ENCODE measurements at regions of chr12 and their contacts with region 1.

Region 1: DNA sequence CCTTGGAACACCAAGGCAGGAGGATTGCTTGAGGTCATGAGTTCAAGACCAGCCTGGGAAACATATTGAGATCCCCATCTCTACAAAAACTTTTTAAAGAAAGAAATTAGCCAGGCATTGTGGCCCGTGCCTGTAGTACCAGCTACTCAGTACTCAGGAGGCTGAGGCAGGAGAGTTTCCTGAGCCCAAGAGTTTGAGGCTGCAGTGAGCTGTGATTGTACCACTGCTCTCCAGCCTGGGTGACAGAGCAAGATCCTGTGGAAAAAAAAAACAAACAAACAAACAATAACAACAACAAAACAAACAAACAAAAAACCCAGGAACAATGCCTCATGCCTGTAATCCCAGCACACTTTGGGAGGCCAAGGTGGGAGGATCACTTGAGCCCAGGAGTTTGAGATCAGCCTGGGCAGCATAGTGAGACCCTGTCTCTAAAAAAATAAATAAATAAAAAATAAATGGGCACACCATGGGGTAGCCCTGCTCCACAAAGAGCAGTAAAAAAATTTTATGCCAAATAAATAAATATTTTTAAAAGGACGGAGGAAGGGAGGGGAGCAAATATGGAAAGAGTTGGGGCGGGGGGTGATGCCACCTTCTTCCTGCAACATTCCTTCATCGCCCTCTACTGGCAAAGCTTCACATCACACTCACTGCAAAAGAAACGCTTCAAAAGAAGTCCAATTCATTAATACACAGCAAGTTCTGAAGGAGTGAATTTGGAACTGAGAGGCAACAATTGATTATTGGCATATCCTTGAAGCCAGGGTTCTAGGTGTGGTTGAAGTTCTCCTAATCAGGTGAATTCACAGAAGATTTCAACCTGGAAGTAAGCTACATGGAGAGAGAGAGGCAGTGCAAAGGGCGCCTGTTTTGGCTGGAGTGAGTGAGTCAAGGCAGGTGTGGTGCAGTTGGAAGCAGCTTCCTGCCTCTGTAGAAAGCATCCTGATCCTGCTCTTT is 8.8 kb upstream of the GNPTAB start:
- DNase-seq: no peak
- H3K4me3 ChIP-seq: no peak overlapping the region
- H3K27ac ChIP-seq: no peak overlapping the region
- H3K4me1 ChIP-seq: peaks cover 0 to 10% (median 0%) of the 10 kb centered on the region in 3 donors
- H3K27me3 ChIP-seq: no peaks in the 10 kb centered on the region
- CTCF ChIP-seq: peak; percentile 73 to 90 (median 83)
- POLR2A ChIP-seq: no peak

Region 2: DNA sequence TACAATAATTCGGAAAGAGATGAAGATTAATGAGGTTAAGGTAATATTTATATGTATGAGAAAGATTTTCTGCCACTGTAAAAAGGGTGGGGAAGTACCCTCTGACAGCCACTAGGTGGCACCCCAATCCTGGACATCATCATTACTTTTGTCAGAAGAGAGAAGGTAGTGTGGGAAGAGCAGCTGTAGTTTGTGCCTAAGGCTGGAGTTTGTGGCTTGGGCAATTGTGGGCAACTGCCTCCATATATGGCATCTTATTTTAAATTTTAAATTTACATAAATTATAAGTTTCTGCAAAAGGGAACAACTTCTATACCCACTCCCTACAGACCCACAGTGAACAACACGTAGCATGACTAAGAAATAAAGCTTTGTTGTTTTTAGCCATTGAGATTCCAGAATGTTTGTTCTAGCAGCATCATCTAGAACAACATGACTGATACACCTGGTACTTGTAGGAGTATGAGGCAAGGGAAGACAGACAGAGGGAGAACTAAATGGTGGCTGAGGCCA is 65.9 kb before region 1 on chr12:
- intact Hi-C with region 1: loop called (anchors 5 kb)
- DNase-seq: no peak
- H3K4me3 ChIP-seq: no peak overlapping the region
- H3K27ac ChIP-seq: no peak overlapping the region
- H3K4me1 ChIP-seq: peaks cover 0 to 6% (median 0%) of the 10 kb centered on the region in 3 donors
- H3K27me3 ChIP-seq: no peaks in the 10 kb centered on the region
- CTCF ChIP-seq: peak; percentile 85 to 97 (median 94)
- POLR2A ChIP-seq: no peak

Region 3: DNA sequence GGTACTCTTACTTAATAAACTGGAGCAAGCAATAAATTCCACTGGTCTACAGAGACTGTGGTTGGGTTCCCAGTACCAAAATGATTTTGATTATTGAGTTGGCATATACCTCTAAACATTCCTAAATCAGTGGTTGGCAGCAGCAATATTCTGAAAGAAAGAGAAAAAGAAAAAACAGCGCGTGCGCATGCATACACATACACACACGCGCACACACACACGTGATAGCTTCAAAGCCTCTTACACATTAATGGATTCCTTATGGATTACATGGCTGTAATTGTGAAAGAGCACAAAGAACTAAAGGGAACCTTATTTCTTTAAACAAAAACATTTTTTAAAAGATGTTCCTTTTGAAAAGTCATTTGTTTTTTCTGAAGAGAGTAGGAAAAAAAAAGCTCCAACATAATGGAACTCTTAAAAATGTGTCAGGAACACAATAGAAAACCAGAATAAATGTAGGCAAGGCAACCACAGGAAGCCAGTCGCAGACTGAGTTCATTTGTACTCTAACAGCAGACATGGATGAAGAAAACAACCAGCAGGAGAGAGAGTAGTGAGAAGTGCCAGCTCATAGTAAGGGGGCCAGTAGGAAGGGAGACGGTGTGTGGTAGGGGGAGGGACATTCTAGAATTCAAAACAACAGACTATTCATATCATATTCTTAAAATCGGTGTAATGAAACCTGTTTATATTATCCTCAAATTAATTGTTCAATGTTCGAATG is 117.8 kb after region 1 on chr12:
- intact Hi-C with region 1: no loop called
- DNase-seq: no peak
- H3K4me3 ChIP-seq: no peak overlapping the region
- H3K27ac ChIP-seq: peak overlapping the region in 1 of 4 donors; percentile 54
- H3K4me1 ChIP-seq: no peaks in the 10 kb centered on the region
- H3K27me3 ChIP-seq: no peaks in the 10 kb centered on the region
- CTCF ChIP-seq: no peak
- POLR2A ChIP-seq: no peak

Measured in esophagus squamous epithelium (tissue), 5 donors.